ENCODE measurements at regions of chr4 and their contacts with region 1.

Region 1: DNA sequence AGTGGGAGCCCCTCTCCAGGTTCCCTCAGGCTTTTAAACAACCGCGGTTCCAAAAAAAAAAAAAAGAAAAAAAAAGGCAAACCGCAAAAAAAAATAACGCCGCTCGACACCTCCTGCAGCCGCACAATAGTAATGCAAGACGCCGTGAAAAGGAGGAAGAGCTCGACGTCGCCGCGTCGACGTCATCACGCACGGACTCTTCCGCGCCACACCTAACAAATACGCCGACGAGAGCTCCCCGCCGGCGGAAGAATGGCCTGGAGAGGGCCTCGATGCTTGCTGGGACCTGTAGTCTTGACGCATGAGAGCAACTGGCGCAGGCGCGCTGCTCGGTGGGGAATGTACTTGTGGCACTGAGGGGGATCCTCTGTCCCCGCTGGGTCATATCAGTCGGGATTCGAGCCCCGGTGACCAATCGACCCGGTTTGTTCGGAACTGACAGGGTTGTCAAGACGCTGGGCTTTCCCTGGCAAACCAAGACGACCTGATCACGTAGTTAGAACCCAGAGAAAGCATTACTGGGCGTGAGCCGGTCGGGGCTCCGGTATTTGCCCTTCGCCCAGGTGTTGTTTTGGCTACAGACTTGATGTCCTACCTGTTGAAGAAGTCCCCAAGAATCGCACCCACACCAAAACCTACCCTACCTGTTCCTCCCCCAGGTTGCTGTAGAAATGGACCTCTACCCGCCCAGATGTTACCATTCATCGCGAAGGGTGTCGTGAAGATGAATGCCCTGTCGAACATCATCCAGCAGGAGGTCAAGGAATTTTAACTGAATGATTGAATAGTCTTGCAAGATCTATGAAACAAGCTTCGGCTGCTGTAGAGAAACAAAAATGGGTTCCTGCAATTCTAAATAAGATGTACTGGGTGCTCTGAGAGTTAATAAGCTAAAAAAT is at the start of gene CBR4:
- DNase-seq: peak; percentile 89 to 100 (median 96)
- ATAC-seq: peak; percentile 94
- H3K4me3 ChIP-seq: peak within 1 kb of the TSS; percentile 73 to 96
- H3K4me3 Mint-ChIP-seq: peak within 1 kb of the TSS; percentile 97
- H3K27ac ChIP-seq: peak within 1 kb of the TSS; percentile 85
- H3K27ac Mint-ChIP-seq: peak within 1 kb of the TSS; percentile 96
- H3K4me1 ChIP-seq: peaks cover 23% of the 10 kb centered on the region
- H3K4me1 Mint-ChIP-seq: peaks cover 41% of the 10 kb centered on the region
- H3K27me3 ChIP-seq: no peaks in the 10 kb centered on the region
- H3K27me3 Mint-ChIP-seq: peaks cover 2% of the 10 kb centered on the region
- CTCF ChIP-seq: peak; percentile 55
- total RNA-seq, gene CBR4: 4.6 to 6.0 TPM

Region 2: GRCh38 chr4:167079762-167080161 is 1930.6 kb before region 1 on chr4:
- CTCF ChIA-PET with region 1: no interaction called
- POLR2A ChIA-PET with region 1: no interaction called
- intact Hi-C with region 1: no loop called
- DNase-seq: no peak
- ATAC-seq: no peak
- H3K4me3 ChIP-seq: no peak overlapping the region
- H3K4me3 Mint-ChIP-seq: no peak overlapping the region
- H3K27ac ChIP-seq: no peak overlapping the region
- H3K27ac Mint-ChIP-seq: no peak overlapping the region
- H3K4me1 ChIP-seq: no peaks in the 10 kb centered on the region
- H3K4me1 Mint-ChIP-seq: no peaks in the 10 kb centered on the region
- H3K27me3 ChIP-seq: no peaks in the 10 kb centered on the region
- H3K27me3 Mint-ChIP-seq: no peaks in the 10 kb centered on the region
- CTCF ChIP-seq: no peak

Region 3: GRCh38 chr4:168480931-168481611 is 529.3 kb before region 1 on chr4:
- CTCF ChIA-PET with region 1: no interaction called
- POLR2A ChIA-PET with region 1: interaction called, 6 read pairs
- intact Hi-C with region 1: loop called (anchors 1 to 5 kb)
- DNase-seq: peak in 8 of 9 experiments; percentile 16 to 89 (median 56)
- ATAC-seq: peak; percentile 67
- H3K4me3 ChIP-seq: peak overlapping the region; percentile 56 to 93
- H3K4me3 Mint-ChIP-seq: peak overlapping the region; percentile 99
- H3K27ac ChIP-seq: peak overlapping the region; percentile 82 to 96
- H3K27ac Mint-ChIP-seq: peak overlapping the region; percentile 97
- H3K4me1 ChIP-seq: peaks cover 42% of the 10 kb centered on the region
- H3K4me1 Mint-ChIP-seq: peaks cover 66% of the 10 kb centered on the region
- H3K27me3 ChIP-seq: no peaks in the 10 kb centered on the region
- H3K27me3 Mint-ChIP-seq: no peaks in the 10 kb centered on the region
- CTCF ChIP-seq: no peak

Region 4: DNA sequence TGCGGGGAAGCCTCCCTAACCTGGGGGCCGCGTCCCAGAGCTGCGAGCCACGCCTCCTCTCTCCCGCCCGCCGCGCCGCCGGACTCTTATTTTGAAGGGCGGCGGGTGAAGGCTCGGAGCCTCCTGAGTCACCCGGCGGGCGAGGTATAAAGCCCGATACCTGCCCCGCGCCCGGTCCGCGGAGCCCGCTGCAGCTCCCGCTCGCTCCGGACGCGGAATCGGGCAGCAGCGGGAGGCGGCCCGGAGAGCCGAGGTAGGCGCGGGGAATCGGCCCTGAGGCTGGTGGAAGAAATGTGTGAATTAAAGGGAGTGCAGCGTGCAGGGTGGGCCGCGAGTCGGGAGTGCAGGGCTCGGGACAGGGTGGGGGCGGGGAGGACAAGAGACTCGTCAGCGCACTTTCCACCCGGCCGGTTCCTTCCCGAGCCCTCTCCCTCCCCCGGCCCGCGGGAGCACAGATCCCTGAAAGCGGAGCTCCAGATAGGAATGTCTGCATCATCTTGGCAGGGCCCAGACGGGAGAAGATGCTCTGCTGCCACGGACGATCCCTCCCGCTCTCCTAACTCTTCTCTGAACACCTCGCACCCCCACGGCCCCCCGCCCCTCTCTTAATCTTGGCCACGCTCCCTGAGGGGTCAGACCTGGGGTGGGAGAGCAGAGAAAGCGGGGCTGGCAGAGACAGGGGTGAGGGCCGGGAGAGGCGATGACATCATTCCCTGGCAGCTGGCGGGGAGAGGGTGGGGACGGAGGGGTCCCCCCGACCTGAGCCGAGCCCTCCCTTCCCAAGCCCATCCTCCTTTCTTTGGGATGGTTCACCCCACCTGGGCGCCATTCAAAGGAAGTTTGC is 178.2 kb before region 1 on chr4:
- CTCF ChIA-PET with region 1: no interaction called
- POLR2A ChIA-PET with region 1: interaction called, 3 read pairs
- intact Hi-C with region 1: loop called in 1 of 2 experiments (anchors 5 kb)
- DNase-seq: peak in 8 of 9 experiments; percentile 26 to 70 (median 45)
- ATAC-seq: peak; percentile 85
- H3K4me3 ChIP-seq: peak overlapping the region; percentile 59 to 63
- H3K4me3 Mint-ChIP-seq: peak overlapping the region; percentile 84
- H3K27ac ChIP-seq: no peak overlapping the region
- H3K27ac Mint-ChIP-seq: no peak overlapping the region
- H3K4me1 ChIP-seq: peaks cover 11% of the 10 kb centered on the region
- H3K4me1 Mint-ChIP-seq: peaks cover 18% of the 10 kb centered on the region
- H3K27me3 ChIP-seq: peaks cover 14 to 16% of the 10 kb centered on the region in 2 experiments
- H3K27me3 Mint-ChIP-seq: peaks cover 55% of the 10 kb centered on the region
- CTCF ChIP-seq: no peak

Region 5: GRCh38 chr4:168995537-168996295 is 14.7 kb before region 1 on chr4:
- CTCF ChIA-PET with region 1: interaction called, 5 read pairs
- POLR2A ChIA-PET with region 1: interaction called, 10 read pairs
- intact Hi-C with region 1: no loop called
- DNase-seq: peak in 2 of 9 experiments; percentile 41 to 46
- ATAC-seq: no peak
- H3K4me3 ChIP-seq: no peak overlapping the region
- H3K4me3 Mint-ChIP-seq: no peak overlapping the region
- H3K27ac ChIP-seq: no peak overlapping the region
- H3K27ac Mint-ChIP-seq: no peak overlapping the region
- H3K4me1 ChIP-seq: no peaks in the 10 kb centered on the region
- H3K4me1 Mint-ChIP-seq: peaks cover 9% of the 10 kb centered on the region
- H3K27me3 ChIP-seq: no peaks in the 10 kb centered on the region
- H3K27me3 Mint-ChIP-seq: no peaks in the 10 kb centered on the region
- CTCF ChIP-seq: no peak

Region 6: GRCh38 chr4:169757575-169758184 is 747.3 kb after region 1 on chr4 and contains the start of gene HPF1:
- CTCF ChIA-PET with region 1: no interaction called
- POLR2A ChIA-PET with region 1: interaction called, 5 read pairs
- intact Hi-C with region 1: loop called (anchors 2 to 5 kb)
- DNase-seq: peak; percentile 82 to 97 (median 95)
- ATAC-seq: peak; percentile 98
- H3K4me3 ChIP-seq: peak within 1 kb of the TSS; percentile 62 to 97
- H3K4me3 Mint-ChIP-seq: peak within 1 kb of the TSS; percentile 82
- H3K27ac ChIP-seq: peak within 1 kb of the TSS; percentile 31 to 63
- H3K27ac Mint-ChIP-seq: peak within 1 kb of the TSS; percentile 64
- H3K4me1 ChIP-seq: peaks cover 14% of the 10 kb centered on the region
- H3K4me1 Mint-ChIP-seq: peaks cover 34% of the 10 kb centered on the region
- H3K27me3 ChIP-seq: no peaks in the 10 kb centered on the region
- H3K27me3 Mint-ChIP-seq: no peaks in the 10 kb centered on the region
- CTCF ChIP-seq: no peak
- total RNA-seq, gene HPF1: 3.1 to 4.2 TPM